ENCODE measurements at regions of chr20 and their contacts with region 1.

Region 1: GRCh38 chr20:63381807-63382322 is 20.7 kb upstream of the CHRNA4 start:
- DNase-seq: no peak
- ATAC-seq: peak in 7 of 8 donors; percentile 32 to 69 (median 49)
- H3K4me3 ChIP-seq: no peak overlapping the region
- H3K27ac ChIP-seq: no peak overlapping the region
- H3K4me1 ChIP-seq: peaks cover 0 to 3% (median 0%) of the 10 kb centered on the region in 9 donors
- H3K27me3 ChIP-seq: peaks cover 0 to 67% (median 59%) of the 10 kb centered on the region in 7 donors
- CTCF ChIP-seq: peak; percentile 82 to 97 (median 93)

Region 2: DNA sequence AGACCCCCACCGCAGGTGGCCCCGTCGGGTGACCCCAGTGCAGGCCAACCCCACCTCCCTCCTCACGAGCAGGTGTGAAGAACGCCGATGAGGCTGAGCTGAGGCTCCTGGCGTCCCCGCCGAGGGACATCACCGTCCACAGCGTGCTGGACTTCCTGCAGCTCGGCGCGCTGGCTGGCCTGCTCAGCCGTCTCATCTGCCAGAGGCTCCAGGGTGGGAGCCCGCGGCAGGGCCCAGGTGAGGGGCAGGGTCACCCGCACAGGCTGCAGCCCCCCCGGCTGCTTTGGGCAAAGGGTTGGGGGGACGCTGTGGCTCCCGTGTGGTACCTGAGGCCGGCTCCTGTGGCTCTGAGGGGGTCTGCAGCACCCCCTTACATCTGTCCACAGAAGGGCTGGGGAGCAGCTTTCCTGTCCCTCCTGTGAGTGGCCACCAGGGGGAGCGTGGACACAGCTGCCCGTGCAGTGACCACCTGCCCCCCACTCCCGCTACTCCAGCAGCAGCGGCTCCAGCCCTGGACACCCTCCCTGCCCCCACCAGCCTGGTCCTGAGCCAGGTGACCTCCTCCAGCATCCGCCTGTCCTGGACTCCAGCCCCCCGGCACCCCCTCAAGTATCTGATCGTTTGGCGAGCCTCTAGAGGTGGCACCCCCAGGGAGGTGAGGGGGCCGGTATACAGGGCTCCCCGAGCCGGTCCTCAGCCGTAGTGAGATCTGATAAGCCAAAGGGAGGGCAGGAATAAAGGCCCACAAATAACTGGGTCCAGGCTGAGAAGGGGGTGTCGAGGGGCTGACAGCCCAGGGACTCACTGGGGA is 72.4 kb before region 1 on chr20:
- intact Hi-C with region 1: loop called (anchors 1 to 2 kb)
- DNase-seq: peak; percentile 30 to 46
- ATAC-seq: peak; percentile 22 to 62 (median 54)
- H3K4me3 ChIP-seq: no peak overlapping the region
- H3K27ac ChIP-seq: no peak overlapping the region
- H3K4me1 ChIP-seq: peaks cover 0 to 18% (median 4%) of the 10 kb centered on the region in 9 donors
- H3K27me3 ChIP-seq: peaks cover 7 to 59% (median 42%) of the 10 kb centered on the region in 7 donors
- CTCF ChIP-seq: peak; percentile 75 to 95 (median 88)

Region 3: DNA sequence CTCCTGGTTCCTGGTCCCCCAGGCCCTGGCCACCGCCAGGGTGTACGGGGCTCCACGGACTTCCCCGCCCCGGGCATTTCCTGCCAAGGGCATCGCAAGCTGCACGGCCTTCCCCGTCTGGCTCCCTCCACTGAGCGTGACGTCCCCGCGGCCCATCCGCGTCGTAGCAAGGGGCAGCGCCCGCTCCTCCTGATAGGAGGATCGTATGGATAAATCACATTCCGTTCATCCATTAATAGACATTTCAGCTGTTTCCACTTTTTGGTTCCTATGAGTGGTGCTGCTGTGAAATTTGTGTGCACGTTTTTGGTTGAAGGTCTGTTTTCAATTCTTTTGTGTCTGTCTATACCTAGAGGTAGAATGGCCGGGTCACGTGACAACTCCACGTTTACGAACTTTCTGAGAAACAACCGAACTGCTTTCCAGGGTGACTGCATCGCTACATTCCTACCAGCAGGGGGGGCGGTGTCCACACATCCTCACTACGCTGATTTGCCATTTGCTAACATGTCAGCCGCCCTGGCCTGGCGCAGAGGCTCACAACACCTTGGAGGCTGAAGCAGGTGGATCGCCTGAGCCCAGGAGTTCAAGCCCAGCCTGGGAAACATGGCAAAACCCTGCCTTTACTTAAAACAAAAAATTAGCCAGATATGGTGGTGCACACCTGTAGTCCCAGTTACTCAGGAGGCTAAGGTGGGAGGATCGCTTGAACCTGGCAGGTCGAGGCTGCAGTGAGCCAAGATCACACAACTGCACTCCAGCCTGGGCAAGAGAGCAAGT is 52.9 kb after region 1 on chr20:
- intact Hi-C with region 1: no loop called
- DNase-seq: peak; percentile 23 to 56
- ATAC-seq: peak in 6 of 8 donors; percentile 21 to 70 (median 53)
- H3K4me3 ChIP-seq: no peak overlapping the region
- H3K27ac ChIP-seq: peak overlapping the region in 1 of 10 donors; percentile 49
- H3K4me1 ChIP-seq: peaks cover 0 to 17% (median 5%) of the 10 kb centered on the region in 9 donors
- H3K27me3 ChIP-seq: peaks cover 0 to 7% (median 0%) of the 10 kb centered on the region in 7 donors
- CTCF ChIP-seq: peak; percentile 40 to 88 (median 72)

Region 4: GRCh38 chr20:63475206-63475605 is 93.3 kb after region 1 on chr20:
- intact Hi-C with region 1: no loop called
- DNase-seq: no peak
- ATAC-seq: peak in 5 of 8 donors; percentile 36 to 64 (median 54)
- H3K4me3 ChIP-seq: no peak overlapping the region
- H3K27ac ChIP-seq: no peak overlapping the region
- H3K4me1 ChIP-seq: peaks cover 0 to 13% (median 9%) of the 10 kb centered on the region in 9 donors
- H3K27me3 ChIP-seq: peaks cover 27 to 94% (median 90%) of the 10 kb centered on the region in 7 donors
- CTCF ChIP-seq: no peak